ENCODE measurements at regions of chr15 and their contacts with region 1.

Region 1: DNA sequence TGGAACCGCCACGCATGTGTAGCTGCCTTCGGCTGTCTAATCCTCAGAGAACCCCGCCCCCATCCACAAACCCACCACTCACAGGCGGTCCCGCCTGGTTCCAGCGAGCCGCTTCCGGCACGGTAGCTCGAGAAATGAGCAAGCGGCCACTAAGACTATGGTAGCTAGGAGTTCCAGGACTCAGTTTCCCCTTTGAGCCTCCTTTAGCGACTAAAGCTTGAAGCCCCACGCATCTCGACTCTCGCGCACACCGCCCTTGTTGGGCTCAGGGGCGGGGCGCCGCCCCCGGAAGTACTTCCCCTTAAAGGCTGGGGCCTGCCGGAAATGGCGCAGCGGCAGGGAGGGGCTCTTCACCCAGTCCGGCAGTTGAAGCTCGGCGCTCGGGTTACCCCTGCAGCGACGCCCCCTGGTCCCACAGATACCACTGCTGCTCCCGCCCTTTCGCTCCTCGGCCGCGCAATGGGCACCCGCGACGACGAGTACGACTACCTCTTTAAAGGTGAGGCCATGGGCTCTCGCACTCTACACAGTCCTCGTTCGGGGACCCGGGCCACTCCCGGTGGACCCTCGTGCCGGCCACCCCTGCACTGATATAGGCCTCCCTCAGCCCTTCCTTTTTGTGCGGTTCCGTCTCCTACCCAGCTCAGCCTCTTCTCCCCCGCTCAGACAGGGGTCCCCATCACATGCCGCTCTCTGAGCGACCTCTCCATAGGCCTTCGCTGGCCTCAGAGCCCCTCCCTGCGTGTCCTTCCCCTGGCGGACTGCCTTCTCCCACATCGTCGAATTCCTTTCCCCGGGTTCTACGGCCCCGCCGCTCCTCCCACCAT is at the start of gene RAB11A:
- DNase-seq: peak; percentile 94
- ATAC-seq: peak; percentile 94
- H3K4me3 Mint-ChIP-seq: peak within 1 kb of the TSS; percentile 99
- H3K27ac Mint-ChIP-seq: peak within 1 kb of the TSS; percentile 97
- H3K4me1 Mint-ChIP-seq: peaks cover 29% of the 10 kb centered on the region
- H3K27me3 Mint-ChIP-seq: peaks cover 4% of the 10 kb centered on the region
- CTCF ChIP-seq: no peak
- total RNA-seq, gene RAB11A: 98.2 and 104 TPM in 2 replicates

Region 2: GRCh38 chr15:65245096-65245856 is 624.1 kb before region 1 on chr15:
- CTCF ChIA-PET with region 1: no interaction called
- POLR2A ChIA-PET with region 1: no interaction called
- intact Hi-C with region 1: no loop called
- DNase-seq: no peak
- ATAC-seq: no peak
- H3K4me3 Mint-ChIP-seq: no peak overlapping the region
- H3K27ac Mint-ChIP-seq: no peak overlapping the region
- H3K4me1 Mint-ChIP-seq: peaks cover 2% of the 10 kb centered on the region
- H3K27me3 Mint-ChIP-seq: no peaks in the 10 kb centered on the region
- CTCF ChIP-seq: no peak

Region 3: DNA sequence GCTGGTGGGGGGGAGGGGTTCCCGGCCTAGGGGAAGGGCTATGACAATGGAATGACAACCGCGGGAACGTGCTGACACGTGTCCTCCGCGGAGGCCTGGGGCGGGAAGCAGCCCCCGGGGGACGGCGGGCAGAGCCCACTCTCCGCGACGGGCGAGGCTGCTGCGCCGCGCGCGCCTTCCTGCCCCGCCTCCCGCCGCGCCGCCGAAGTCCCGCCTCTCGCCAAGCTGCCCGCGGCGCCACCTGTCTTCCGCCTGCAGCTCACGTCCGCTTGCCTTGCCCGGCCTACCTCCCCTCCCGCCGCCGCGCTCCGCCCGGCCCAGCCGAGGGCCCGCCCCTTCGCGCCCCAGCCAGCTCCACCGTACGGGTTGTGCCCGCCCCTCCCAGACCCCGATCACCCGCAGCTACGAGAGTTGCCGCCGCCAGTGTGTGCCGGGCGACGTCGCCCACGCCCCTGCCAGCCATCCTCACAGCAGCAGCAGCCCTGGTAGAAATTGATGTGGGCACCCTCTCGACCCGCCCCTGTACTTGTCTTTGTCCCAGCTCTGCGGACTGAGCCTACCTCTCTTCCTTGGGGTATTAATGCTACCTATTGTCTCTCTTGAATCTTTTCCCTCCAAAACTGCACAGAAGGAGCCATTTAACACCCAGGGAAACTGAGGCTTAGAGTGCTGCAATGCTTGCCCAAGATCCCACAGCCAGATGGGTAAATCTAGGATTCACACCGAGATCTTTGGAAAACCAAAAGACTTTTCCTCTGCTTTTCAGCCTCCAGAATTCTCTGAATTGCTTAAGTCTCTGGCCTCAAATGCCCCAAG is 582.4 kb before region 1 on chr15 and contains the start of gene PARP16:
- CTCF ChIA-PET with region 1: no interaction called
- POLR2A ChIA-PET with region 1: interaction called, 3 read pairs
- intact Hi-C with region 1: loop called (anchors 5 kb)
- DNase-seq: peak; percentile 94
- ATAC-seq: peak; percentile 96
- H3K4me3 Mint-ChIP-seq: peak within 1 kb of the TSS; percentile 85
- H3K27ac Mint-ChIP-seq: peak within 1 kb of the TSS; percentile 90
- H3K4me1 Mint-ChIP-seq: peaks cover 27% of the 10 kb centered on the region
- H3K27me3 Mint-ChIP-seq: no peaks in the 10 kb centered on the region
- CTCF ChIP-seq: no peak
- total RNA-seq, gene PARP16: 11.2 and 11.5 TPM in 2 replicates

Region 4: DNA sequence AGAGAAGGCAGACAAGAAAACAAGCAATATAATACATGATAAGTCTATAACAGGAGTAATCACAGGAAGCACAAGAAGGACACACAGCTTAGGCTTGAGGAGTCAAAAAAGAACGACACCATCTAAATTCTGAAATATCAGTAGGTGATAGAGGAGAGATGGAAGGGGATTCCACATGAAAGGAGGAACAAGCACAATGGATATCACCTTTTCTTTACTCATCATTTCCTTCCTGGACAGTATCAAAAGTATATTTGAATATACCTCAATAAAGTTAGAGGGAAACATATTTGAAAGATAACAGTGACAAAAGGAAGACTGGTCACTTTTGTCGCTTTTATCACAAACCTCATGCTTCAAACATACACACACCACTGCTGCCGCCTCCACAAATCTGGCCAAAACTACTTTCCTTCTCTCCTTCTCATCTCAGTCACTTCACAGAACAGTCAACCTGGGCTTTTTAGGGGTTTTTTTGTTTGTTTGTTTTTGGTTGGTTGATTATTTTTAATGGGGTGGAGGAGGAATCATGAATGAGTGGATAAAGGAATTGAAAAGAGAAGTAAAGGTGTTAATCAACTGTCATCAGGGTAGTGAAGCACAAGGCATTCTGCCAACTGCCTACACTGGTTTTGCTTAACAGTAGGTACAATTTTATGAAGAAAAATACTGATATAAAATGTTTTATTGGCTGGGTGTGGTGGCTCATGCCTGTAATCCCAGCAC is 95.8 kb before region 1 on chr15:
- CTCF ChIA-PET with region 1: interaction called, 3 read pairs
- POLR2A ChIA-PET with region 1: interaction called, 13 read pairs
- intact Hi-C with region 1: no loop called
- DNase-seq: no peak
- ATAC-seq: peak; percentile 71
- H3K4me3 Mint-ChIP-seq: peak overlapping the region; percentile 76
- H3K27ac Mint-ChIP-seq: peak overlapping the region; percentile 94
- H3K4me1 Mint-ChIP-seq: peaks cover 90% of the 10 kb centered on the region
- H3K27me3 Mint-ChIP-seq: no peaks in the 10 kb centered on the region
- CTCF ChIP-seq: no peak

Region 5: DNA sequence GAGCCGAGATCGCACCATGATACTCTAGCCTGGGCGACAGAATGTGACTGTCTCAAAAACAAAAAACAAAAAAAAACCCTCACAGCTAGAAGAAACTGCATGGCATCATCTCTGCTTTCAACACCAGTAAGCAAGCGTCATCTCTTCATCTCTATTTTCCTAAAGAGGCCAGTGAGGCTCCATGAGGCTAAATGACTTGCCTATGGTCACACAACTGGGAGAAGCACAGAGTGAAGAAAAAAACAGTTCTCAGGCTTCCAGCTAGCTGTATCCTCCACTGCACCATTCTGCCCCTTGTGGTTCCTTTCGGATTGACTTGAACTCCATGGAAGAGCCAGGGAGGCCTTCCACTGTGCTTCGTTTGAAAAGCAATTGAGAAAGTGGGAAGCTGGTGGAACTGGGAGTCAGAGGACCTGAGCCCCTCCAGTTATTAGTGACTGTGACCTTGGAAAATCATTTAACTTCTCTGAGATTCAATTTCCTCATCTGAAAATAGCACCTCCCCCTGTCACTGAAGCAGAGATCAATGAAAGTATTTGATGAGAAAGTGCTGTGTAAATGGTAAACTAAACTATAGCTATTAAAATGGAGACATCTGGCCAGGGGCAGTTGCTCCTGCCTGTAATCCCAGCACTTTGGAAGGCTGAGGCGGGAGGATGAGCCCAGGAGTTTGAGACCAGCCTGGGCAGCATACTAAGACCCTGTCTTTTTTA is 45.2 kb before region 1 on chr15:
- CTCF ChIA-PET with region 1: no interaction called
- POLR2A ChIA-PET with region 1: interaction called, 21 read pairs
- intact Hi-C with region 1: loop called (anchors 1 kb)
- DNase-seq: no peak
- ATAC-seq: peak; percentile 37
- H3K4me3 Mint-ChIP-seq: no peak overlapping the region
- H3K27ac Mint-ChIP-seq: peak overlapping the region; percentile 51
- H3K4me1 Mint-ChIP-seq: peaks cover 68% of the 10 kb centered on the region
- H3K27me3 Mint-ChIP-seq: no peaks in the 10 kb centered on the region
- CTCF ChIP-seq: no peak

Region 6: GRCh38 chr15:65881766-65882434 is 12.6 kb after region 1 on chr15:
- CTCF ChIA-PET with region 1: interaction called, 10 read pairs
- POLR2A ChIA-PET with region 1: interaction called, 13 read pairs
- intact Hi-C with region 1: loop called (anchors 1 kb)
- DNase-seq: no peak
- ATAC-seq: no peak
- H3K4me3 Mint-ChIP-seq: peak overlapping the region; percentile 12
- H3K27ac Mint-ChIP-seq: peak overlapping the region; percentile 5
- H3K4me1 Mint-ChIP-seq: peaks cover 52% of the 10 kb centered on the region
- H3K27me3 Mint-ChIP-seq: no peaks in the 10 kb centered on the region
- CTCF ChIP-seq: no peak

Region 7: DNA sequence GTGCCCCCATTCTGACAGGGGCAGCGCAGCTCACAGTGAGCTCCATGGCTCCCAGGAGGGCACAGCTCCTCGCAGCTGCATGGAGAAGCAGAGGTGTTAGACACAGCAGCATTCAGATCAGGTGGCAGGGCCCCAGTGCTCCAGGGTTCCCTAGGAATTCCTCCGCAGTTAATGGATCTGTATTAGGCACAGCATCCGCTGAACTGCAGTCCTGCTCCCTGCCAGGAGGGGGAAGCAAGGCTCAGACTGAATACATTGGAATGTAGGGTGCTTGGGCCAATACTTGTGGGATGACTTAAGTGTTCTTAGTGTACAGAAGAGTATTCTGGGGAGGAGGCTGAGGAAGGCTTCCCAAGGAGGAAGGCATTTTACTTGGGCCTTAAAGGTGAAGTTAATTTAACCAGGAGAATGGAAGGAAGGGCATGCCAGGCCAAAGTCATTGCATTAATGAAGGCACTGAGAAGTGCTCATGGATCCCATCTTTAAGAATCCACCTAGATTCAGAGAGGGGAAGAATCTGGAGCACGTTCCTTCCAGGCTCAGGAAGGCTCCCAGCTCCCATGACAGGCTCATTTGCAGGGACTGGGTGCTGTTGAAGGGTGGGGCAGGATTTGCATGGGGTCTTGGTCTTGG is 111.6 kb after region 1 on chr15:
- CTCF ChIA-PET with region 1: interaction called, 3 read pairs
- POLR2A ChIA-PET with region 1: interaction called, 3 read pairs
- intact Hi-C with region 1: loop called (anchors 1 kb)
- DNase-seq: no peak
- ATAC-seq: no peak
- H3K4me3 Mint-ChIP-seq: no peak overlapping the region
- H3K27ac Mint-ChIP-seq: no peak overlapping the region
- H3K4me1 Mint-ChIP-seq: peaks cover 19% of the 10 kb centered on the region
- H3K27me3 Mint-ChIP-seq: peaks cover 26% of the 10 kb centered on the region
- CTCF ChIP-seq: no peak

Region 8: GRCh38 chr15:66231394-66232266 is 362.3 kb after region 1 on chr15:
- CTCF ChIA-PET with region 1: no interaction called
- POLR2A ChIA-PET with region 1: no interaction called
- intact Hi-C with region 1: no loop called
- DNase-seq: no peak
- ATAC-seq: no peak
- H3K4me3 Mint-ChIP-seq: no peak overlapping the region
- H3K27ac Mint-ChIP-seq: no peak overlapping the region
- H3K4me1 Mint-ChIP-seq: no peaks in the 10 kb centered on the region
- H3K27me3 Mint-ChIP-seq: peaks cover 10% of the 10 kb centered on the region
- CTCF ChIP-seq: no peak

Region 9: GRCh38 chr15:66700802-66701421 is 831.6 kb after region 1 on chr15:
- CTCF ChIA-PET with region 1: no interaction called
- POLR2A ChIA-PET with region 1: no interaction called
- intact Hi-C with region 1: loop called (anchors 5 kb)
- DNase-seq: peak; percentile 85
- ATAC-seq: peak; percentile 88
- H3K4me3 Mint-ChIP-seq: peak overlapping the region; percentile 88
- H3K27ac Mint-ChIP-seq: peak overlapping the region; percentile 70
- H3K4me1 Mint-ChIP-seq: peaks cover 22% of the 10 kb centered on the region
- H3K27me3 Mint-ChIP-seq: peaks cover 18% of the 10 kb centered on the region
- CTCF ChIP-seq: no peak